GM12878 (cell line): ENCODE measurements at regions of chr10 and their contacts with region 1.

Region 1: GRCh38 chr10:62244780-62245467 is 23.7 kb downstream of the RTKN2 start:
- DNase-seq: peak; percentile 75
- ATAC-seq: peak; percentile 74
- H3K4me3 ChIP-seq: no peak overlapping the region
- H3K27ac ChIP-seq: peak overlapping the region; percentile 83; the same call in 1 of the 2 replicates
- H3K4me1 ChIP-seq: peaks cover 12% of the 10 kb centered on the region; the same call in 1 of the 2 replicates
- H3K27me3 ChIP-seq: no peaks in the 10 kb centered on the region
- CTCF ChIP-seq: peak; percentile 77 to 90 (median 78)
- EP300 ChIP-seq: no peak
- POLR2A ChIP-seq: no peak
- RAD21 ChIP-seq: peak; percentile 99

Region 2: DNA sequence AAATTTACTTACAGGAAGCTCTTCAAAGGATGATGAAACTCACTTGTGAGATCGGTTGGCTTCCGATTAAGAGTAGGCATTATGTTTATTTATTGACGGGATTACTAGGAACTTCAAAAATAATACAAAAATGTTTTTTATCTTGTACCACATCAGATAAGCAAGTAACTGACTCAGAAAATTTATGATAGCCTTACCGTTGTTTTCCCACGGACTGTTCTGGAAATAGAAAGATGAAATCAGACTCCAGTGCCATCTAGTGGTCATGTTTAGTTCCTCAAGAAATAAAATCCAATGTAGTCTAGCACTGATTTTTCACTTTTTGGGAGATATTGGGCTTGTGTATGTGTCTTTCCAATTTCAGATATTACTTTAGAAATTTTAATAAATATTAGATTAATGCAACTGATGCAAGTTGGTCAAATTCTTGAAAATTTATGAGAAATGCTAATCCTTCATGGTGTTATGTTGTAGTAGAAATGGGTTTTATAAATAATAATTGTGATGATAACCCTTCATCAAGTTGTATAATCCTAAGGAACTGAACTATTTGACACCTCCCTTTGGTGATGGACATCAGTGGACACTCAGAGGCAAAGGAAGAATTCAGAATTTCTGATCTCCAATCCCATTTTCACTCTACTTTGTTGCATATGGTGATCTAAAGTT is 960.6 kb before region 1 on chr10:
- CTCF ChIA-PET with region 1: no interaction called
- POLR2A ChIA-PET with region 1: no interaction called
- RAD21 ChIA-PET with region 1: no interaction called
- SMC1A ChIA-PET with region 1: no interaction called
- in situ Hi-C with region 1: no loop called
- intact Hi-C with region 1: loop called (anchors 10 kb)
- DNase-seq: no peak
- ATAC-seq: no peak
- H3K4me3 ChIP-seq: no peak overlapping the region
- H3K27ac ChIP-seq: no peak overlapping the region
- H3K4me1 ChIP-seq: peaks cover 14% of the 10 kb centered on the region; the same call in 1 of the 2 replicates
- H3K27me3 ChIP-seq: no peaks in the 10 kb centered on the region
- CTCF ChIP-seq: peak; percentile 53 to 62 (median 60); a peak in 5 of 6 replicates
- EP300 ChIP-seq: no peak
- POLR2A ChIP-seq: no peak
- RAD21 ChIP-seq: peak; percentile 59

Region 3: DNA sequence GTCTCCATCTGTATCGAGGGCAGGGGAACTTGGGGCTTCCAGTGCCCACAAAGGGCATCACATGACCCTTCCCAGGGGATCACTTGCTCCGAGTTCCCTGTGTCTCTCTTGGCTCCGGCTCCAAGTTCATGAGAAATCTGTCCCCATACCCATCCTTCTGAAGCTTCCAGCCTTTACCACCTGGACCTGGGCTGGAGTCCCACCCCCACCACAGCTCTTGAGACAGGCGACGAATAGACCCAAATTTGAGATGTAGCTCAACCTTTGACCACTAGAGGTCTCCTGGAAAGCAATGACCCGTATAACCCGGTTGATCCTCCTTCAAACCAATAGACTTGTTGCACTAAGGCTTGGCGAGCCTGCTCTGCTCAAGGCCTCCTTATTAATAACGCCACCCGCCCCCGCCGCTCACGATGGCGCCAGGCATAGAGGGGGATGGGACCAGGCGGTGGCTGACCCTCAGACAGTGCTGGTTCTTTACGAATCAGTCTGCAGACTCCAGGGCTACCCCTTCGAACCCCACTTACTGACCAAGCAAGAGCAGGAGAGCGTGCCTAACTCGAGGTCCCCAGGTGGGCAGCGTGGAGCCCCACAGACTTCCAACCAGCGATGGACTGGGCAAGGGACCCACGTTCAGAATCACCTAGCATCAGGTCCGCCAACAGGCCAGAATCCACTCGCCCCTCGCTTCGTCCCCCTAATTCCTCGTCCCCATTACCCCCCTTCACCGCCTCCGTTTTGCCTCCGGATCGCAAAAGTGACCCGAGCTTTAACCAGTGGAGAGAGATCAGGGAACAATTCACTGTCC is 347.9 kb before region 1 on chr10:
- CTCF ChIA-PET with region 1: interaction called, 86 read pairs
- POLR2A ChIA-PET with region 1: interaction called, 3 read pairs
- RAD21 ChIA-PET with region 1: interaction called, 29 read pairs
- SMC1A ChIA-PET with region 1: interaction called, 42 read pairs
- in situ Hi-C with region 1: loop called (anchors 5 kb)
- intact Hi-C with region 1: loop called (anchors 1 kb)
- DNase-seq: peak; percentile 85
- ATAC-seq: peak; percentile 79
- H3K4me3 ChIP-seq: no peak overlapping the region; the same call in 1 of the 2 replicates
- H3K27ac ChIP-seq: peak overlapping the region; percentile 57
- H3K4me1 ChIP-seq: peaks cover 28% of the 10 kb centered on the region
- H3K27me3 ChIP-seq: no peaks in the 10 kb centered on the region
- CTCF ChIP-seq: peak; percentile 76 to 86 (median 85)
- EP300 ChIP-seq: no peak
- POLR2A ChIP-seq: no peak
- RAD21 ChIP-seq: peak; percentile 79

Region 4: DNA sequence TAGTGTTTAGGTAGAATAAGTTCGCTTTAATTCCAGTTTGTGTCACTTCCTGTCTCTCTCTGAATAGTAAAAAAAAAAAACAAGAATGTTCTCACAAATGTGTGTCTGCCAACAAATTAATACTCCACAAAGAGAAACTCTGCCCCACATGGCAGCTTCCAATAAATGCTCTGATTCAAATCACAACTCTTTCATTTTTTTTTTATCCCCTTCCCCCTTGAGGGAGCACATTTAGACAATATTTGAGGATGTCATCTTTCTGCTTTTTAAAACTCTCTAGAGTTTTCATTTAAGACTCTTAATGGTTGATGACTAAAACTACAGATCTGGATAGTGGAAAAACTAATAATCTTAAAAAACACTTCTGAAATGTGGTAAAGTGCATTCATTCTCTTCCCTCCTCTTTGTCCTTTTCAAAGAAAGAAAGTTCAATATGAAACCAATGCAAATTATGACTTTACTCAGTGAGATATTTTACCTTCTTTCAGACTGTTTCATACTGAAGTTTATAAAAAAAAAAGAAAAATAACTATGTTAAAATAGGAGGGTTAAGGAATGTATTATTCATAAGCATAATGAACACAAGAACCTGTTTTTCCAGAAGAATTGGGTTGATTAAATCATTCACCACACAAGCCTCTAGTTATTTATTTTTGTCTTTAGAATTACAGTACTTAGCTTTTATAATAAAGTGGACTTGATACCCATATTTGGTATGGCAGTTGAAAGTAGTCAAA is 301.1 kb before region 1 on chr10:
- CTCF ChIA-PET with region 1: interaction called, 3 read pairs
- POLR2A ChIA-PET with region 1: no interaction called
- RAD21 ChIA-PET with region 1: no interaction called
- SMC1A ChIA-PET with region 1: no interaction called
- in situ Hi-C with region 1: no loop called
- intact Hi-C with region 1: loop called (anchors 2 kb)
- DNase-seq: no peak
- ATAC-seq: peak; percentile 73
- H3K4me3 ChIP-seq: 0 out of 2 replicates have a peak overlapping the region, but pooled peaks have one; percentile 53
- H3K27ac ChIP-seq: peak overlapping the region; percentile 97
- H3K4me1 ChIP-seq: peaks cover 52% of the 10 kb centered on the region
- H3K27me3 ChIP-seq: no peaks in the 10 kb centered on the region
- CTCF ChIP-seq: peak in 1 of 3 experiments; percentile 11; a peak in 1 of 6 replicates
- EP300 ChIP-seq: peak in 1 of 2 experiments; percentile 63; a peak in 1 of 4 replicates
- POLR2A ChIP-seq: no peak
- RAD21 ChIP-seq: peak; percentile 42; the same call in 1 of the 2 replicates

Region 5: DNA sequence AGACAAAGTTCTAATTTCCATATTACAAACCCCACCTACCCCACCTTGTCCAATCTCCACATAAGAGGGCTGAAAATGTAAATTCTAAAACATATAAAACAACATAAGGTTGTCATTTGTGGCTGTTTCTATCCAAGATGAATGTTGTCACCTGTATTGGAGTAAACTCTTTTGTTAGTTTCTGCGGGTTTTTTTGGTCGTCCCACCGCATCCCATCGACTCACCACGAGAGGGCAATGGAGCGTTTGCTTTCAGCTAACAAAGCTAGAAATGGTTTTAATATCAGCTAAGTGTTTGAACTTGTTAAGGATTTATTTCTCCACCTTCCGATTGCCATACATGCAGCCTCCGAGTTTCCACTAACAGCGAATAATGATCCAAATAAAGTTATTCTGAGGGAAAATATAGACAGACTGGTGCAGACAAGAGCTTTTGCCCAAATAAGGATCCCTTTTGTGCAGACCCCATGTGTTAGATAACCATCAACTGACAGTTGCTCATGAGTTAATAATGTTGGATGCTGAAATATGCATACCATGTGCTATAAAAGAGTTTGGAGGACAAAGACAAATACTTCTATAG is 206.2 kb before region 1 on chr10:
- CTCF ChIA-PET with region 1: interaction called, 278 read pairs
- POLR2A ChIA-PET with region 1: interaction called, 5 read pairs
- RAD21 ChIA-PET with region 1: interaction called, 116 read pairs
- SMC1A ChIA-PET with region 1: interaction called, 195 read pairs
- in situ Hi-C with region 1: no loop called
- intact Hi-C with region 1: loop called (anchors 1 kb)
- DNase-seq: no peak
- ATAC-seq: peak; percentile 83
- H3K4me3 ChIP-seq: no peak overlapping the region
- H3K27ac ChIP-seq: peak overlapping the region; percentile 16
- H3K4me1 ChIP-seq: peaks cover 44% of the 10 kb centered on the region
- H3K27me3 ChIP-seq: no peaks in the 10 kb centered on the region
- CTCF ChIP-seq: peak; percentile 70 to 86 (median 81)
- EP300 ChIP-seq: no peak
- POLR2A ChIP-seq: no peak
- RAD21 ChIP-seq: peak; percentile 96

Region 6: GRCh38 chr10:62079885-62080559 is 164.9 kb before region 1 on chr10:
- CTCF ChIA-PET with region 1: interaction called, 4 read pairs
- POLR2A ChIA-PET with region 1: no interaction called
- RAD21 ChIA-PET with region 1: interaction called, 3 read pairs
- SMC1A ChIA-PET with region 1: no interaction called
- in situ Hi-C with region 1: no loop called
- intact Hi-C with region 1: loop called (anchors 2 kb)
- DNase-seq: peak; percentile 69
- ATAC-seq: peak; percentile 57
- H3K4me3 ChIP-seq: peak overlapping the region; percentile 12; the same call in 1 of the 2 replicates
- H3K27ac ChIP-seq: peak overlapping the region; percentile 74
- H3K4me1 ChIP-seq: peaks cover 47% of the 10 kb centered on the region
- H3K27me3 ChIP-seq: no peaks in the 10 kb centered on the region
- CTCF ChIP-seq: no peak
- EP300 ChIP-seq: no peak
- POLR2A ChIP-seq: peak; percentile 74
- RAD21 ChIP-seq: no peak